Activated CD4-positive, alpha-beta T cell treated with anti-CD3 and anti-CD28 coated beads for 36 hours (primary cell): ENCODE measurements at regions of chr21 and their contacts with region 1.

Region 1: DNA sequence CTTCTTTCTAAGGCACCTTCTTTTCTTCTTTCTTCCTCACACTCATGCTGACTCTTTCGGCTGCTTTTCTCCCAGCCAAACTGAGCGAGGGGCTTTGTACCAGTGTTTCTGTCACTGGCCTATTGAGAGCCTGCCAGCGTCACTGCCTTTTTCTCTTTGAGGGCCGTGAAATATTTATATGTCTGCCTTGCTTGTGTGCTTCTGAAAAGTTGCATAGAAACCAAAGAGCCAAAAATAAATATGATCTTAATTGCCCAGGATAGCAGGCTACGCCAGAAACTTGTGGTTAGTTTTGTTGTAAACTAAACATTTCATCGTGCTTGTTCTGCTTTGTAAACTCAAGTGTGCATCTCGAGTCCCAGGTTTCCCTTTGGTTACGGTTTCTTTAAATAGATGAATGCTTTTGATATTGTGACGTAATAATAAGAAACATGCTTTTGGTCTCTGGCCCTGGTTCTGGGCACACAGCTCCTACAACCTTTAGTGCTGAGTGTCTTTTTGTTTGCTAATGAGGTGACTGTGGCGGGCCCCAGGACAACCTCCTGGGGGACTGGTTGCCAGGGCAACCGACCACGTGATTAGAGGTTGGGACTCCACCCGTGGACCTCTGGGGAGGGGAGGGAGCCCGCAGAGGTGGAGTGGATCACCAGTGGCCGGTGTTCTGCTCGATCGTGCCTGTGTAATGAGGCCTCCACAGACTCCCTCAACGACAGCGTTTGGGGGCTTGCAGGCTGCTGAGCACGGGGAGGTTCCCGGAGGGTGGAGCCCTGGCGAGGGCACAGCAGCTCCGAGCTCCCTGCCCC is 10.9 kb downstream of the SLC37A1 start:
- DNase-seq: peak; percentile 56
- ATAC-seq: no peak
- H3K4me3 Mint-ChIP-seq: no peak overlapping the region
- H3K27ac Mint-ChIP-seq: peak overlapping the region; percentile 58
- H3K4me1 Mint-ChIP-seq: peaks cover 49% of the 10 kb centered on the region
- H3K27me3 Mint-ChIP-seq: no peaks in the 10 kb centered on the region

Region 2: GRCh38 chr21:42062236-42063022 is 462.1 kb before region 1 on chr21:
- CTCF ChIA-PET with region 1: no interaction called
- POLR2A ChIA-PET with region 1: no interaction called
- intact Hi-C with region 1: loop called in 1 of 2 experiments (anchors 2 kb)
- DNase-seq: peak; percentile 86
- ATAC-seq: peak; percentile 65
- H3K4me3 Mint-ChIP-seq: peak overlapping the region; percentile 60
- H3K27ac Mint-ChIP-seq: peak overlapping the region; percentile 86
- H3K4me1 Mint-ChIP-seq: peaks cover 43% of the 10 kb centered on the region
- H3K27me3 Mint-ChIP-seq: no peaks in the 10 kb centered on the region

Region 3: DNA sequence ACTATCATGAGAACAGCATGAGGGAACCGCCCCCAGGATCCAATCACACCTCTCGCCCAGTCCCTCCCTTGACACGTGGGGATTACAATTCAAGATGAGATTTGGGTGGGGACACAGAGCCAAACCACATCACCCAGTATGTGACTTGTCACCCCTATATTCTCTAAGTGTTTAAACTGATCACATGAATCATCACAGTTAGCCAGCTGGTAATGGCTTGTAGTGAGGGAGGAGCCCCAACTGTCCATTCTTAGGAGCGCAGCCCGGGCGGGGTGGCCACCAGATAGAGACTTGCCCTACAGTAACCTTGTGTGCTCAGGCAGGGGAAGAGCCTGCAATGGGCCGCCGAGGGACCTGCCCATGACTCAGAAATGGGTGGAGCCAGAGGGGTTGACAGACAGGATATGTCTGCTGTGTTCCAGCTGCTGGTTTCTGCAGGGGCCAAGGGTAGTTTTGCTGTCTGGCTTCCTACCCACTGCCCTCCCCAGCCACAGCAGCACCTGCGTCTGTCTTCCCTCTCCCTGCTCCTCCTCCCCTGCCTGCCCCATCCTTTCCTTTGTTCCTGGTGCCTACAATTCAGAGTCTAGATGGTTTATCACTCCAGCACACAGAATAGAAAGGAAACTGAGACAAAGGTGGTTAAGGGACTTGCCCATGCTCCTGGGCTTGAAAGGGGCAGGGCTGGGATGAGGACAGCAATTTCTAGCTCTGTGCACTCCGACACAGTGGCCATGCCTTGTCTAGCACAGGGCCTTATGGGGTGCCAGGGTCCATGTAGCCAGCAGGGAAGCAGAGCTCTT is 296.4 kb before region 1 on chr21:
- CTCF ChIA-PET with region 1: no interaction called
- POLR2A ChIA-PET with region 1: no interaction called
- intact Hi-C with region 1: loop called in 1 of 2 experiments (anchors 2 kb)
- DNase-seq: peak; percentile 97
- ATAC-seq: peak; percentile 96
- H3K4me3 Mint-ChIP-seq: peak overlapping the region; percentile 39
- H3K27ac Mint-ChIP-seq: peak overlapping the region; percentile 94
- H3K4me1 Mint-ChIP-seq: peaks cover 80% of the 10 kb centered on the region
- H3K27me3 Mint-ChIP-seq: no peaks in the 10 kb centered on the region

Region 4: GRCh38 chr21:42299324-42300044 is 225.1 kb before region 1 on chr21:
- CTCF ChIA-PET with region 1: no interaction called
- POLR2A ChIA-PET with region 1: no interaction called
- intact Hi-C with region 1: no loop called
- DNase-seq: peak; percentile 68
- ATAC-seq: peak; percentile 92
- H3K4me3 Mint-ChIP-seq: no peak overlapping the region
- H3K27ac Mint-ChIP-seq: no peak overlapping the region
- H3K4me1 Mint-ChIP-seq: peaks cover 13% of the 10 kb centered on the region
- H3K27me3 Mint-ChIP-seq: no peaks in the 10 kb centered on the region

Region 5: GRCh38 chr21:42309753-42310221 is 214.8 kb before region 1 on chr21:
- CTCF ChIA-PET with region 1: interaction called, 4 read pairs
- POLR2A ChIA-PET with region 1: no interaction called
- intact Hi-C with region 1: loop called in 1 of 2 experiments (anchors 5 kb)
- DNase-seq: peak; percentile 88
- ATAC-seq: peak; percentile 89
- H3K4me3 Mint-ChIP-seq: no peak overlapping the region
- H3K27ac Mint-ChIP-seq: no peak overlapping the region
- H3K4me1 Mint-ChIP-seq: no peaks in the 10 kb centered on the region
- H3K27me3 Mint-ChIP-seq: peaks cover 2% of the 10 kb centered on the region

Region 6: DNA sequence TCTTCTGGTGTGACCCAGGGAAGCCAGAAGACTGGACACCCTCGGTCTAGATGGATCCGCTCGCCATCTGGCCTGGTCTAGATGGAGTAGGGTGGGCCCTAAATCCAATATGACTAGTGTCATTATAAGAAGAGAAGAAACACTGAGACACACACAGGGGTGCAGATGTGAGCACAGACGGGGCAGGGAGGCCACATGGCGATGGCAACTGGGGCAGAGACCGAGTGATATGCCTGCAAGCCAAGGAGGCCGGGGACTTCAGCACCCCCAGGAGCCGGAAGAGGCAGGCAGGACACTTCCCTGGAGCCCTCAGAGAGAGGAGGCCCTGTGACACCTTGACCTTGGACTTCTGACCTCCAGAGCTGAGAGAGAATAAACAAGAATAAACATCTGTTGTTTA is 203.8 kb before region 1 on chr21:
- CTCF ChIA-PET with region 1: no interaction called
- POLR2A ChIA-PET with region 1: no interaction called
- intact Hi-C with region 1: no loop called
- DNase-seq: no peak
- ATAC-seq: no peak
- H3K4me3 Mint-ChIP-seq: no peak overlapping the region
- H3K27ac Mint-ChIP-seq: no peak overlapping the region
- H3K4me1 Mint-ChIP-seq: peaks cover 5% of the 10 kb centered on the region
- H3K27me3 Mint-ChIP-seq: peaks cover 5% of the 10 kb centered on the region

Region 7: GRCh38 chr21:42414928-42415769 is 109.4 kb before region 1 on chr21:
- CTCF ChIA-PET with region 1: no interaction called
- POLR2A ChIA-PET with region 1: no interaction called
- intact Hi-C with region 1: loop called (anchors 2 to 5 kb)
- DNase-seq: peak; percentile 99
- ATAC-seq: peak; percentile 71
- H3K4me3 Mint-ChIP-seq: peak overlapping the region; percentile 68
- H3K27ac Mint-ChIP-seq: no peak overlapping the region
- H3K4me1 Mint-ChIP-seq: peaks cover 27% of the 10 kb centered on the region
- H3K27me3 Mint-ChIP-seq: no peaks in the 10 kb centered on the region

Region 8: GRCh38 chr21:42496122-42496900 is 28.2 kb before region 1 on chr21 and contains the start of gene RSPH1:
- CTCF ChIA-PET with region 1: no interaction called
- POLR2A ChIA-PET with region 1: no interaction called
- intact Hi-C with region 1: loop called (anchors 1 to 5 kb)
- DNase-seq: peak; percentile 100
- ATAC-seq: peak; percentile 99
- H3K4me3 Mint-ChIP-seq: peak within 1 kb of the TSS; percentile 75
- H3K27ac Mint-ChIP-seq: peak within 1 kb of the TSS; percentile 69
- H3K4me1 Mint-ChIP-seq: peaks cover 25% of the 10 kb centered on the region
- H3K27me3 Mint-ChIP-seq: peaks cover 2% of the 10 kb centered on the region
- total RNA-seq, gene RSPH1: 0.21 to 0.34 TPM